ENCODE measurements at regions of chr6 and their contacts with region 1.

Region 1: GRCh38 chr6:14129575-14129974 is 12.0 kb downstream of the CD83 start:
- DNase-seq: peak; percentile 52 to 54
- H3K4me3 ChIP-seq: no peak overlapping the region
- H3K4me3 Mint-ChIP-seq: no peak overlapping the region
- H3K27ac Mint-ChIP-seq: no peak overlapping the region
- H3K4me1 ChIP-seq: no peaks in the 10 kb centered on the region
- H3K4me1 Mint-ChIP-seq: no peaks in the 10 kb centered on the region
- H3K27me3 ChIP-seq: no peaks in the 10 kb centered on the region
- H3K27me3 Mint-ChIP-seq: no peaks in the 10 kb centered on the region
- CTCF ChIP-seq: peak; percentile 33 to 79

Region 2: GRCh38 chr6:14144678-14145113 is 15.1 kb after region 1 on chr6:
- CTCF ChIA-PET with region 1: interaction called, 6 read pairs
- POLR2A ChIA-PET with region 1: no interaction called
- intact Hi-C with region 1: loop called (anchors 1 kb)
- DNase-seq: peak; percentile 73 to 82
- H3K4me3 ChIP-seq: no peak overlapping the region
- H3K4me3 Mint-ChIP-seq: no peak overlapping the region
- H3K27ac Mint-ChIP-seq: no peak overlapping the region
- H3K4me1 ChIP-seq: no peaks in the 10 kb centered on the region
- H3K4me1 Mint-ChIP-seq: no peaks in the 10 kb centered on the region
- H3K27me3 ChIP-seq: no peaks in the 10 kb centered on the region
- H3K27me3 Mint-ChIP-seq: peaks cover 2% of the 10 kb centered on the region
- CTCF ChIP-seq: peak; percentile 82 to 92

Region 3: GRCh38 chr6:15491255-15491985 is 1361.8 kb after region 1 on chr6:
- CTCF ChIA-PET with region 1: no interaction called
- POLR2A ChIA-PET with region 1: no interaction called
- intact Hi-C with region 1: loop called (anchors 1 kb)
- DNase-seq: peak in 1 of 2 experiments; percentile 66
- H3K4me3 ChIP-seq: no peak overlapping the region
- H3K4me3 Mint-ChIP-seq: no peak overlapping the region
- H3K27ac Mint-ChIP-seq: no peak overlapping the region
- H3K4me1 ChIP-seq: no peaks in the 10 kb centered on the region
- H3K4me1 Mint-ChIP-seq: no peaks in the 10 kb centered on the region
- H3K27me3 ChIP-seq: no peaks in the 10 kb centered on the region
- H3K27me3 Mint-ChIP-seq: no peaks in the 10 kb centered on the region
- CTCF ChIP-seq: peak; percentile 83 to 90